Activated naive CD4-positive, alpha-beta T cell treated with anti-CD3 and anti-CD28 coated beads for 36 hours (primary cell): ENCODE measurements at regions of chr2 and their contacts with region 1.

Region 1: DNA sequence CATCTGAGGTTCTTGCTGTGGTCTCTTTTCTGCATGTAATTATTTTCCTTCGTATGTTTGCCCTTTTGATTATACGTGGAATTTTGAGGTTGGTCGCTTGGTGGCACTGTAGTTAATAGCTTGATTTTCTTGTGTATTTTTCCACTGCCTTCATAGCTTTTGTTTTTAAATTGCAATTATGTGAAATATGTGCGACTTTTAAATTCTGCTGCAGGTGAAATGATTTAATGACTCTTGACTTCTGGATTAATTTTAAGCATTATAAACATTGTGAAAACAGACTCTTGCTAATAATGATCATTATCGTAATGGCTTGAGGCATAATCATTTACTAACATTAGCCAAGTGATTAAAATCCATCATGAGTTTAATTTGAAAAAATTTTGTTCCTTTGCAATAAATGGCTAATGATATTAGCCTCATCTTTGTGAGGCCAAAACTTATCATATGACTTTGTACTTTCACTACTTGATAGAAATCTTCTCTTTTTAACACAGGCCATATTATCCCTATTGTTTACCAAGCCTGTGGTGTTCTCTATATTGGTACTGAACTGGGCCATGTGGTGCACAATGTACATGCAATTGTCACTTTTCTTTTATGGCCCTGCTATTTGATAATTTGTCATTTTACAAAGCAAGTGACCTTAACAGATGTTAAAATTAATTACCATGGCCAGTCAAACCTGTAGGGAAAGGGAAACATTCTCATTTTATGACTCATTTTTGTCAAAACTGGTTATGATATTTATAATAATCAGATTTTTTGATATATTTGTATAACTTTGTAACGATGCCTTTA is 62.8 kb upstream of the NEUROD1 start:
- DNase-seq: peak; percentile 61
- H3K4me3 Mint-ChIP-seq: no peak overlapping the region
- H3K27ac Mint-ChIP-seq: no peak overlapping the region
- H3K4me1 Mint-ChIP-seq: no peaks in the 10 kb centered on the region
- H3K27me3 Mint-ChIP-seq: peaks cover 2% of the 10 kb centered on the region

Region 2: DNA sequence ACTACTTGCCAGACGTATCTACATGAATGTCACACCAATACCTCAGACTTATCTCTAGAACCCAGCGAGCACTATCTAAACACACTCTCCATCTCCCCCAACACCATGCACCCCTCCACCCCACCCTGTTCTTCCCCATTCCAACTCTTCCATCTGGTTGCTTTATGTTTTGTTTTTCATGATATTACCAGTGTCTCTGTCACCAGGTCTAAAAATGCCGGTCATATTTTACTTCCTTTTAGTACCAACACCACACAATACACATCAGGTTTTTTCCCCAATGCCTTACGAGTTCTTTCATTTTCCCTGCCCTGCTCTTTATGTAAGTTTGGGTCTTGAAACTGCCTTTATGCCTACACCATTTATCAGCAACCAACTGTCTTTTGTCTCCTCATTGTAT is 296.1 kb before region 1 on chr2:
- CTCF ChIA-PET with region 1: no interaction called
- intact Hi-C with region 1: no loop called
- DNase-seq: no peak
- H3K4me3 Mint-ChIP-seq: no peak overlapping the region
- H3K27ac Mint-ChIP-seq: no peak overlapping the region
- H3K4me1 Mint-ChIP-seq: peaks cover 14% of the 10 kb centered on the region
- H3K27me3 Mint-ChIP-seq: no peaks in the 10 kb centered on the region

Region 3: GRCh38 chr2:181904022-181904632 is 161.0 kb after region 1 on chr2:
- CTCF ChIA-PET with region 1: interaction called, 10 read pairs
- intact Hi-C with region 1: loop called (anchors 1 kb)
- DNase-seq: no peak
- H3K4me3 Mint-ChIP-seq: no peak overlapping the region
- H3K27ac Mint-ChIP-seq: no peak overlapping the region
- H3K4me1 Mint-ChIP-seq: peaks cover 23% of the 10 kb centered on the region
- H3K27me3 Mint-ChIP-seq: no peaks in the 10 kb centered on the region

Region 4: GRCh38 chr2:181953881-181954537 is 210.9 kb after region 1 on chr2:
- CTCF ChIA-PET with region 1: interaction called, 10 read pairs
- intact Hi-C with region 1: loop called (anchors 1 kb)
- DNase-seq: peak; percentile 82
- H3K4me3 Mint-ChIP-seq: peak overlapping the region; percentile 17
- H3K27ac Mint-ChIP-seq: no peak overlapping the region
- H3K4me1 Mint-ChIP-seq: peaks cover 9% of the 10 kb centered on the region
- H3K27me3 Mint-ChIP-seq: peaks cover 19% of the 10 kb centered on the region

Region 5: DNA sequence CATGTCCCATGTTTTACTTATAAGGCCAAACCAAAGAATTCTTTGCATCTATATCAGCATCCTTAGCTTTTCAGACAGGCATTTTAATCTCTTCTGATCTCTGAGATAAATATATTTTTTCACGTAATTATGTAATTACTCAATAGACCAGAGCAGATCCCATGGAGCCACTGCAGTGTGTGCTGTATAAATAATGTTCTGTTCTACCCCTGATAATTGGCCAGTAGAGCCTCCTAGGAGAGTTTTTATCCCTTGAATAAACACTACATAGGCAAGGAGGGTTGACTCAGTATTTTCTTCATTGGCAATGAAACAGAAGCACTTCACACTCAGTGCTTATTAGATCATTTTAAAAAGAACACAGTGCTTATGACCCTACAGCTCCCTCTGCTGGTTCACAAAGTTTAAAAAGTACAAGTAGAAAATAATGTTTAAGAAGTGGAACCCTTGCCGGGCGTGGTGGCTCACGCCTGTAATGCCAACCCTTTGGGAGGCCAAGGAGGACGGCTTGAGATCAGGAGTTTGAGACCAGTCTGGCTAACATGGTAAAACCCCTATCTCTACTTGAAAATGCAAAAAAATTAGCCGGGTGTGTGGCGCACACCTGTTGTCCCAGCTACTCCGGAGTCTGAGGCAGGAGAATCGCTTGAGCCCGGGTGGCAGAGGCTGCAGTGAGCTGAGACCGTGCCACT is 334.5 kb after region 1 on chr2:
- CTCF ChIA-PET with region 1: interaction called, 4 read pairs
- intact Hi-C with region 1: loop called (anchors 1 kb)
- DNase-seq: peak; percentile 28
- H3K4me3 Mint-ChIP-seq: no peak overlapping the region
- H3K27ac Mint-ChIP-seq: no peak overlapping the region
- H3K4me1 Mint-ChIP-seq: no peaks in the 10 kb centered on the region
- H3K27me3 Mint-ChIP-seq: peaks cover 7% of the 10 kb centered on the region

Region 6: DNA sequence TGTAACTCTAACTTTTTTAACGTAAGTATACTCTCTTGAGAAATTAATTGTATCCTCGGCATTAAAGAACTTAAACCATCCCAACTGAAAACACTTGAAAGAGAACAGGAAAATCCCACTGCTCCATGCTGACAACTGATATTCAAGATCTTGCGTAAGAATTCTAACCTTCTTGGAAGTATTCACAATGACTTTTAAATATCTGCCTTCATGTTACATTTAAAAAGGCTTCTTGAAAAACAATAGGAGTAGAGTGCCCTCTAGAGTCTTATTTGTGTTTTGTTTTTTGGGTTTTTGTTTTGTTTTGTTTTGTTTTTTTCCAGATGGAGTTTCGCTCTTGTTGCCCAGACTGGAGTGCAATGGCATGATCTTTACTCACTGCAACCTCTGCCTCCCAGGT is 907.6 kb after region 1 on chr2:
- CTCF ChIA-PET with region 1: no interaction called
- intact Hi-C with region 1: loop called (anchors 1 kb)
- DNase-seq: no peak
- H3K4me3 Mint-ChIP-seq: no peak overlapping the region
- H3K27ac Mint-ChIP-seq: no peak overlapping the region
- H3K4me1 Mint-ChIP-seq: peaks cover 5% of the 10 kb centered on the region
- H3K27me3 Mint-ChIP-seq: no peaks in the 10 kb centered on the region